ENCODE measurements at regions of chr18 and their contacts with region 1.

Region 1: GRCh38 chr18:30658306-30658705 is 384.2 kb downstream of the DSC3 start:
- DNase-seq: no peak
- ATAC-seq: no peak
- H3K4me3 ChIP-seq: no peak overlapping the region
- H3K4me3 Mint-ChIP-seq: no peak overlapping the region
- H3K27ac ChIP-seq: no peak overlapping the region
- H3K27ac Mint-ChIP-seq: no peak overlapping the region
- H3K4me1 ChIP-seq: no peaks in the 10 kb centered on the region
- H3K4me1 Mint-ChIP-seq: no peaks in the 10 kb centered on the region
- H3K27me3 ChIP-seq: no peaks in the 10 kb centered on the region
- H3K27me3 Mint-ChIP-seq: no peaks in the 10 kb centered on the region
- CTCF ChIP-seq: no peak

Region 2: GRCh38 chr18:30675493-30675892 is 17.2 kb after region 1 on chr18:
- intact Hi-C with region 1: loop called (anchors 1 kb)
- DNase-seq: no peak
- ATAC-seq: no peak
- H3K4me3 ChIP-seq: no peak overlapping the region
- H3K4me3 Mint-ChIP-seq: no peak overlapping the region
- H3K27ac ChIP-seq: no peak overlapping the region
- H3K27ac Mint-ChIP-seq: no peak overlapping the region
- H3K4me1 ChIP-seq: no peaks in the 10 kb centered on the region
- H3K4me1 Mint-ChIP-seq: no peaks in the 10 kb centered on the region
- H3K27me3 ChIP-seq: no peaks in the 10 kb centered on the region
- H3K27me3 Mint-ChIP-seq: no peaks in the 10 kb centered on the region
- CTCF ChIP-seq: no peak

Region 3: GRCh38 chr18:30965237-30965636 is 306.9 kb after region 1 on chr18:
- intact Hi-C with region 1: no loop called
- DNase-seq: no peak
- ATAC-seq: no peak
- H3K4me3 ChIP-seq: no peak overlapping the region
- H3K4me3 Mint-ChIP-seq: no peak overlapping the region
- H3K27ac ChIP-seq: no peak overlapping the region
- H3K27ac Mint-ChIP-seq: no peak overlapping the region
- H3K4me1 ChIP-seq: no peaks in the 10 kb centered on the region
- H3K4me1 Mint-ChIP-seq: no peaks in the 10 kb centered on the region
- H3K27me3 ChIP-seq: no peaks in the 10 kb centered on the region
- H3K27me3 Mint-ChIP-seq: no peaks in the 10 kb centered on the region
- CTCF ChIP-seq: no peak

Measured in natural killer cell (primary cell).